OCI-LY7 (cell line): ENCODE measurements at regions of chr10 and their contacts with region 1.

Region 1: DNA sequence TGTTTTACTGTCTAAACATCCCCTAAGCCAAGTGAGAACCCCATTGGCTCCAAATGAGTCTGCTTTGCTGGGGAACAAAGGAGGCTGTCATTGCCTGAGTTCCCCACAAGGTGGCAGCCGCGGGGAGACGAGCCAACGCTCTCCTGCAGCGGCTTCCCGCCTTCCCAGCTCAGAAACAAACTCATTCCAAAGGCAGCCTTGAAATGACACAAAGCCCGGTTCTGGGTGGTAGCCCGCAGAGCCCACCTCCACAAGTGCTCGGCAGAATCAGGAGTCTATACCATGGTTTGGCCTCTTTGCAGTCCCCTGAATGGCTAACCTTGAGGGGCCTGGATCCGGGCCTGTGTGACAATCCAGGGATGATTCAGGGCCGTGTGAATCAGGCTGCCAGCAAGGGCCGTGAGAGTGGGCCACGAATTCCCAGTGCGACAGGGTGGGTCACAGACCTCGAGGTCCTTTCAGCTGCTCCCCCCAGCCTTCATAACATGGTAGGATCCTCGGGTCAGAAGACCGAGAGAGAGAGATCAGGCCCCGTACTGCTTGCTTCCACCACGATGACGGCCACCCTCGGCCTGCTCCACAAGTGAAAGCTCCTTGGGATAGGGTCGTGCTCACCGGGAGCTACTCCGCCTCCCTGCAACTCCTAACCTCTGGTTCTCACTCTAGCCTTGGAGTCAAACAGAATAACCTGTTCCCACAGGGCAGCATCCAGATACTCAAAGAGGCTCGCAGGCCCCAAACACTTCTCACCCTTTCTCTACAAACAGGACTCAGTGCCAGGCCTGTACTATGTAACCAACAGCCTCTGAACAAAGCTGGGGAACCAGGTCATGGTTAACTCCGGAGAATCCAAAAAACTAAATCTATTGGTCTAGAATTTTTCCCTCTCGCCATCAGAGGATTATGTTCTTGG is 79.6 kb downstream of the DLG5 start:
- DNase-seq: peak; percentile 43
- H3K4me3 ChIP-seq: no peak overlapping the region
- H3K27ac ChIP-seq: no peak overlapping the region
- H3K4me1 ChIP-seq: no peaks in the 10 kb centered on the region
- CTCF ChIP-seq: peak; percentile 87

Region 2: GRCh38 chr10:78029269-78030226 is 182.6 kb after region 1 on chr10 and contains the start of gene POLR3A:
- CTCF ChIA-PET with region 1: no interaction called
- POLR2A ChIA-PET with region 1: no interaction called
- intact Hi-C with region 1: loop called (anchors 10 kb)
- DNase-seq: peak; percentile 96
- H3K4me3 ChIP-seq: peak within 1 kb of the TSS; percentile 99
- H3K27ac ChIP-seq: peak within 1 kb of the TSS; percentile 70
- H3K4me1 ChIP-seq: peaks cover 19% of the 10 kb centered on the region
- CTCF ChIP-seq: peak; percentile 99
- total RNA-seq, gene POLR3A: 11.6 and 16.3 TPM in 2 replicates

Region 3: DNA sequence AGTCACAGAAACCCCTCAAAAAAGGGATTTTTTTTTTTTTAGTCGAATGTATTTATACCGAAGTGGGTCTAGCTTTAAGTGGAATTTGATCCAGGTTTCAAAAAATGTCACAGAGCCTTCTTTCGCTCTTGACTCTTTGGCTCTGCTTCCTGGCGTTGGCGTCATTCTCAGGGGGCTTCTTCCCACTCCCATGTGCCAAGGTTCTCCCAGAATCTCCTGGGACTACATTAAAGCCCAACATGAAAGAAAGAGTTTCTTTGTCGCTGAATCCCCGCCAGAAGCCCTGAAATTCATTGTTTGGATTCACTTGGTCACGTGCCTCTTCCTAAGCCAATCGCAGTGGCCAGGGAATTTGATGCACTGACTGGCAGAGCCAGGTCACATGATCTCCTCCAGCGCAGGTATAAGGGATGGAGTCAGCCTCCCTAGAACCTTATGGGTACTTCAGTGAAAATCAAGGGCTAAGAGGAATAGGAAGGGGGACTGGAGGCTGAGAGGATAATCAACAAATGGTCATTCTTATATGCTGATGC is 287.9 kb after region 1 on chr10:
- CTCF ChIA-PET with region 1: no interaction called
- POLR2A ChIA-PET with region 1: no interaction called
- intact Hi-C with region 1: no loop called
- DNase-seq: no peak
- H3K4me3 ChIP-seq: no peak overlapping the region
- H3K27ac ChIP-seq: no peak overlapping the region
- H3K4me1 ChIP-seq: no peaks in the 10 kb centered on the region
- CTCF ChIP-seq: no peak

Region 4: DNA sequence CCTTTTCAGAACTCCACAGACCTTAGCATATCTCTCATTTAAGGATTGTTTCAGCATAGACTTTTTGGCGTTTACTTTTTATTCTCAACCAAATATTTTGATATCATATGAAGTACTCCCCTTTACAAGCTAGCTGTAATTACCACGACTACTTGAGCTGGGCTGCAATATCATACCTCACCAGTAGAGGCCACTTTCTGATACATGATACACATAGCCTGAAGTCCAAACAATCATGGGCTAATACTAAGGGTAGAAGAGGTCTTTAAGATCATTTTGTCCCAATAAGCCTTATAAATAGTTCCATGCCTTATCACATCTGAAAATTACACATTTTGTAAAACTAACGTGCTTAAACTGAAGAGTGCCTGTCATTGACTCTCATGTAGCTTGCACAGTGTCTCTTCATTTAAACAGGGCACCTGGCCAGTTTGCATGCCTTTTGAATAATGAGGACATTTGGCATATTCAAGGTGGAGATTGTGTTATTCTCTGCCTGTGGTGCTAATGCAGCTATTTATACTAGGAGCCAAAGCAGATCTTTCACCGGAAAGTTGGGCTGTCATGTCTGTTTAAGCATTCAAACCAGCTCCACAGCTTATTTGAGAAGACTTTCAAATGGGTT is 818.1 kb after region 1 on chr10:
- CTCF ChIA-PET with region 1: no interaction called
- POLR2A ChIA-PET with region 1: no interaction called
- intact Hi-C with region 1: no loop called
- DNase-seq: peak; percentile 37
- H3K4me3 ChIP-seq: no peak overlapping the region
- H3K27ac ChIP-seq: no peak overlapping the region
- H3K4me1 ChIP-seq: peaks cover 3% of the 10 kb centered on the region
- CTCF ChIP-seq: peak; percentile 82